HEK293 (cell line): ENCODE measurements at regions of chr17 and their contacts with region 1.

Region 1: DNA sequence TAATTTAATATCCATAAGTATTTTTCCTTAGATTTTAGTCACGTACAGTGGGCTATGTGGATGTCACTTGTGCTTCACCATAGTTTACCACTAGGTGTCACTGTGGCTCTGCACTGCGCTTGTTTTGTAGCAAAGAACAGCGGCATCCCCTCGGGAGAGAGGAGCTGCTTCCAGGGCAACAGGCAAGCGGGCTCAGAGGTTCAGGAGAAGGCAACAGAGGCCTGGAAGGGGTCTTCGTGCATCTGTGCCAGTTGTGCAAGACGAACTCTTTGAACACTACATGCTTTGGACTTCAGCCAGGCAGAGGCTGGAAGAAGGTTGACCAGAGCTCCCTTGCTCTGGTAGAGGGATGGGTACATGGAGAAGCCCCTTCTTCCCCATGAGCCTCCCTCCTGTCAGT is 20.6 kb downstream of the CYB561 start:
- H3K4me3 ChIP-seq: no peak overlapping the region
- H3K27ac ChIP-seq: no peak overlapping the region
- H3K4me1 ChIP-seq: no peaks in the 10 kb centered on the region
- CTCF ChIP-seq: peak; percentile 75

Region 2: DNA sequence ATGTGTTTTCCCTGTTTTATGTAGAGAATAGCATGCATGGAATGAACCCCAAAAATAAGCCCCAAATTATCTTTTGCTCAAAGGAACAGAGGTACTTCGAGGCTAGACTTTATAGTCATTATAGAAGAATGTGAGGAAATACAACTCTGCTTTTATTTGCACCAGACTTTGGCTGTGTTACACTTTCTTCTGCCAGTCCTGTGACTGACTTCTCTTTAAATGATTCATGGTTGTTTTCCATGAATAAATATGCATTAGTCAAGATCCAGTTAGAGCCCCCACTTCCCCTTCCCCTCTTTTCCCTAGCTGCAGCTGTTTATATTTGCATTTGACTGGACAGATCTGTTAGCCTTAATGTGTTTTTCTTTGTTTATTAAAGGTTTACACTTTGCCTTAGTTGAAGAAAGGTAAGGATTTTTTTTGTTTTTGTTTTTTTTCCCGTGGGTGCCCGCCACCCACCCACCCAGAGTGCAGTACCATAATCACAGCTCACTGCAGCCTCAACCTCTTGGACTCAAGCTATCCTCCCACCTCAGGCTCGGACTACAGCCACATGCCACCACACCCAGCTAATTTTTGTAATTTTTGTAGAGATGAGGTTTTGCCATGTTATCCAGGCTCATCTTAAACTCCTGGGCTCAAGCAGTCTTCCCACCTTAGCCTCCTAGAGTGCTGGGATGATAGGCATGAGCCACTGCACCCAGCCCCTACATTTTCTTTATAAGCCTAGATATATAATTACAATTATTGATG is 132.0 kb before region 1 on chr17:
- CTCF ChIA-PET with region 1: no interaction called
- POLR2A ChIA-PET with region 1: no interaction called
- H3K4me3 ChIP-seq: no peak overlapping the region
- H3K27ac ChIP-seq: no peak overlapping the region
- H3K4me1 ChIP-seq: peaks cover 11% of the 10 kb centered on the region; the same call in 1 of the 2 replicates
- CTCF ChIP-seq: no peak

Region 3: DNA sequence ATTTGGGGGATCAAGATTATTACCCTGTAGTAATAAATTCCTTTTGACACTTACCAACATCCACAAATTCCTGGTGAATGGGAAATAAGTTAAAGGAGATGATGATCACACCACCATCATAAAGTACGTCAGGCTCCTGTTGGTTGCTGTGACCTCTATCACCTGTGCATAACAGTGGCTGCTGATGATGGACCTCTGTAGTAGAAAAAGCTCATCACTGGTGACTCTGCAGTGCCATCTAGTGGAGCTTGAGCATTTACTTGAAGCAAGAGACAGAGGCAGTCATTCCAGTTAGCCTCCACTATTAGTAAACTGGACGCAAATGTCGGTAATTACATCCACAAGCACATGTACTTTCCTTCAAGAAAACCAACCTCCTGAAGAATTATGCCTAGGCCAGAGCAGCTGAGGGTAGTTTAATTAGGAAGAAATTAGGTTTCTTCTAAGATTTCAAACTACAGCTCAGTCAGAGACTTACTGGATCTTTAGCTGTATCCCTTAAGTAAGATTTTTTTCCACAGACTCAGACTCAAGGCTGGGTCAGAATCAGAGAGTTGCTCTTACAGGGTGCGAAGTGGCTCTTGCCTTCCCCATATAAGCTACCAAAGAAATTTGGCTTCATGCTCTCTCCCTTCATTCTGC is 18.7 kb before region 1 on chr17:
- CTCF ChIA-PET with region 1: interaction called, 15 read pairs
- POLR2A ChIA-PET with region 1: no interaction called
- H3K4me3 ChIP-seq: no peak overlapping the region
- H3K27ac ChIP-seq: no peak overlapping the region
- H3K4me1 ChIP-seq: no peaks in the 10 kb centered on the region
- CTCF ChIP-seq: peak; percentile 70

Region 4: GRCh38 chr17:63445979-63446691 is 20.7 kb after region 1 on chr17 and contains the start of gene CYB561:
- CTCF ChIA-PET with region 1: interaction called, 15 read pairs
- POLR2A ChIA-PET with region 1: no interaction called
- H3K4me3 ChIP-seq: peak within 1 kb of the TSS; percentile 41
- H3K27ac ChIP-seq: peak within 1 kb of the TSS; percentile 48; the same call in 1 of the 2 replicates
- H3K4me1 ChIP-seq: 0 out of 2 replicates have a peak, but pooled peaks cover 2% of the 10 kb centered on the region
- CTCF ChIP-seq: no peak

Region 5: DNA sequence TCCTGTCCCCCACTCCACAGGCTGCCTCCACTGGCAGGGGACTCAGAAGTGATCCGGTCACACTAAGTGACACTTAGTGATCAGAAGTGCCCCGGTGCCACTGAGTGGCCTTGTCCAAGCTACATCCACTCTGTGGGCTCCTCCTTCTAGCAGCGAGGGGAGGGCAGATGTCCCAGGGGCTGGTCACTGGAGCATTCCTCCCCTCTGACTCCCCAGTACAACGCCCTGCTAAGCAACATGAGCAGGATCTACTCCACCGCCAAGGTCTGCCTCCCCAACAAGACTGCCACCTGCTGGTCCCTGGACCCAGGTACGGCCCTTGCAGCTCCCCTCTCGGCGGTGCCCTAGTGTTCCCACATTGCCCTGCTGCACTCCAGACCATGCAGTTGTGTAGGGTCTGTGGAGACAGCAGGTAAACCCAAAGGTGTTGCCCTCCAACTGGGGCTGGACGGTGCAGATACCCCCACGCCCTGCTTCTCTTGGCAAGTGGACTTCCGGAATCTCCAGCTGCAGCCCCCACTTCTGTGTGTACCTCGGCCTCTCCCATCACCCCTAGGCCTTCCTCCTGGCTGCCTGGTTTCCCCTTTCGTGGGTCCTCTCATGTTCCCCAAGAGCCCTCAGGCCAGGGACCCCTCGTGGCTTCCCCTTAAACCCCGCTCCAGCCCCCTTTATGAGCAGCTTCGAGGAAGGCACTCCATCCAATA is 53.5 kb after region 1 on chr17:
- CTCF ChIA-PET with region 1: interaction called, 159 read pairs
- POLR2A ChIA-PET with region 1: interaction called, 6 read pairs
- H3K4me3 ChIP-seq: no peak overlapping the region
- H3K27ac ChIP-seq: no peak overlapping the region
- H3K4me1 ChIP-seq: peaks cover 12% of the 10 kb centered on the region
- CTCF ChIP-seq: peak; percentile 95

Region 6: GRCh38 chr17:63571763-63572271 is 146.3 kb after region 1 on chr17:
- CTCF ChIA-PET with region 1: interaction called, 12 read pairs
- POLR2A ChIA-PET with region 1: no interaction called
- H3K4me3 ChIP-seq: no peak overlapping the region
- H3K27ac ChIP-seq: no peak overlapping the region
- H3K4me1 ChIP-seq: no peaks in the 10 kb centered on the region; the same call in 1 of the 2 replicates
- CTCF ChIP-seq: no peak

Region 7: DNA sequence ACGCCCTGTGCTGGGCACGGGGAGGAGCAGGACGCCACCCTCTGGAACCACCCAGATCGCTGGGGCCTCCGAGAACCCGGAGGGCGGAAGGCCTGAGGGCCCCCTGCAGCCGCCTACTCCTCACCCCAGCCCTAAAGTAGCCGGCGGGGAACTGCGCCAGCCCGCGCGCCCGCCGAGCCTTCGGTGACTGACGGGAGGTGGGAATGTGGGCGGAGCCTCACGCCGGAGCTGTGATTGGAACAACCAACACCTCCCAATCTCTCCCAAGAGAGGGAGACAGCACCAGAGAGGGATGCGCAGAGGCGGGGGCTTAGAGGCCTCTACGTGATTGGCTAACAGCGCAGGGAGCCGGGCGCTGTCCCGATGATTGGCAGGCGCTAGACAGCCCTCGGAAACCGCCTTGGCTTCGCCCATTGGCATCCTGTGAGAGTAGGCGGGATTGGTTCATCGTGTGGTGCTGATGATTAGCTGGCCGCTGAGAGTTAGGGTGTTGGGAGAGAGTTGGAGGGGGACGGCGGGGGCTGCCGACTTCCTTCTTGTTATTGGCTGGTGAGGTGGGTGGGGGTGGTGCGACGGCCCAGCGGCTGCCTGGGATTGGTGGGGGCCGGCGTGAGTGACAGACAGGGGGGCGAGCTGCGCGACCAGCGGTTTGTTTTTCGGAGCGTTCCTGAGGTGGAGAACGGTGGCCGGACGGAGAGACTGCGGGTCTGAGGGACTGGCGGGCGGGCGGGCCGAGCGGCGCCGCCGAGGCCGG is 196.5 kb after region 1 on chr17 and contains the start of gene MAP3K3:
- CTCF ChIA-PET with region 1: interaction called, 11 read pairs
- POLR2A ChIA-PET with region 1: interaction called, 10 read pairs
- H3K4me3 ChIP-seq: peak within 1 kb of the TSS; percentile 93
- H3K27ac ChIP-seq: peak within 1 kb of the TSS; percentile 89
- H3K4me1 ChIP-seq: peaks cover 13% of the 10 kb centered on the region
- CTCF ChIP-seq: peak; percentile 93

Region 8: DNA sequence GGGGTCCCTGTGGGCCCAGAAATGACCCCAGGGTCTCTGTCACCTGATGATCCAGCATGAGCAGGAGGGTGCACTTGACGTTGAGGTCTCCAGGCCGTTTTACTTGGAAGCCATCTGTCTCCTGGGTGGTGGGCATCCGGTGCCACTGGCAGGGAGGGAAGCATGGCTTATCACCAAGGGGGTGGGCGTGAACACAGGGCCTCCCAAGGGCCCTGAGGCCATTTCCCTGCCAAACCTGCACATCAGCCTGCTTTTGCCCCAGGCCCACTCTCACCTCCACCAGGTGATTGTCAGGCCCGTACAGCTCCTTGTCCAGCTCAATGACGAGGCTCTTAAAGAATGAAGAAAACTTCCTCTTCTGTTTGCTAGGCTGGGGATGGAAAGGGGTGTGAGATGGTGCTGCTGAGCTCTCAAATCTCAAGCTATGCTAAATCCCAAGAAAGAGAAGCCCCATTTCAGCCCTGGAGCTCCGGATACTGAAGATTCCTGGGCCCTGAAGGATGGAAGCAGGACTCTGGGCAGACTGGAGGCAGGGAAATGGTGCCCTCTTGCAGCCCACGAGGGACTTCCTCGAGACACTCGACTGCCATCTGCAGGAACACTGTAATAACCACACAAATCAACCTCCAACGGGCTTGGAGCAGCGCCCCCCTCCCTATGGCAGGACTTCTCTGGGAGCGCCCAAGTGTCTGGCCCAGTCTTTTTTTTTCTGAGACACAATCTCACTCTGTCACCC is 409.1 kb after region 1 on chr17:
- CTCF ChIA-PET with region 1: interaction called, 12 read pairs
- POLR2A ChIA-PET with region 1: no interaction called
- H3K4me3 ChIP-seq: no peak overlapping the region
- H3K27ac ChIP-seq: 0 out of 2 replicates have a peak overlapping the region, but pooled peaks have one; percentile 1
- H3K4me1 ChIP-seq: peaks cover 7% of the 10 kb centered on the region
- CTCF ChIP-seq: peak; percentile 98